ENCODE measurements at regions of chr4 and their contacts with region 1.

Region 1: DNA sequence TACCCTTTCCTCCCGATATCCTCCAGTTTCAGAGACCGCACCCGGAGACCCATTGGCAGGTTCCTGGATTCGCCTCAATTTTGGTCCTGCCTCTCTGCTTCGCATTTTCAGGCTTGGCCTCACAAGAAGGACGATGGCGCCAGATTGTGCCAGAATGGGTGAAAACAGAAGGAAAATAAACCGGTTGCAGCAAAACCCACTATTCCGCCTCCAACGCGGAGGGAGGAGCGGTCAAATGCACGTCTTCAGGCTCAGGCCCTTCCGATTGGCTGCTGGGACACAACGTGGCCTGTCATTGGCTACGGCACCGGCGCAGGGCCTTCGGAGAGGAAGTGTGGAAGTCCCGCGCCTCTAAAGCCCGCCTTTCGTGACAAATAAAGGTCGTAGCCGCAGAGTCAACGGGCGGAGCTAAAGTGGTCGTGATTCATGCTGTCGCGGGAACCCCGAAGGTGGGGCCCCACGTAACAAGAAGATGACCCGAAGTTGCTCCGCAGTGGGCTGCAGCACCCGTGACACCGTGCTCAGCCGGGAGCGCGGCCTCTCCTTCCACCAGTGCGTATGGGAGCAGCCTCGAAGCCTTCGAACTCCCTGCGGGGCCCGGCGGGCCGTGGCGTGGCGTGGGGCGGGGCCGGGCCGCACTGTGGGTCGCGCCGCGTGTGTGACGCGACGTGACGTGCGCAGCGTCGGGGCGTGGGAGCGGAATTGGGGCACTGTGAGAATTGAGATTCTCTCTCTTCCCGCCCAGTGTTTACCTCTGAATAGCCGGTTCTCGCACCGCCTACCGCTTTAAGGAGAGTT is at the start of gene THAP9:
- DNase-seq: peak; percentile 99
- H3K4me3 Mint-ChIP-seq: no peak within 1 kb of the TSS
- H3K27ac Mint-ChIP-seq: no peak within 1 kb of the TSS
- H3K4me1 Mint-ChIP-seq: peaks cover 38% of the 10 kb centered on the region
- H3K27me3 Mint-ChIP-seq: no peaks in the 10 kb centered on the region
- total RNA-seq, gene THAP9: 1.8 and 2.6 TPM in 2 replicates

Region 2: GRCh38 chr4:82346126-82346525 is 554.4 kb before region 1 on chr4:
- intact Hi-C with region 1: no loop called
- DNase-seq: no peak
- H3K4me3 Mint-ChIP-seq: no peak overlapping the region
- H3K27ac Mint-ChIP-seq: no peak overlapping the region
- H3K4me1 Mint-ChIP-seq: peaks cover 2% of the 10 kb centered on the region
- H3K27me3 Mint-ChIP-seq: no peaks in the 10 kb centered on the region

Region 3: GRCh38 chr4:82373816-82374625 is 526.5 kb before region 1 on chr4 and contains the start of gene HNRNPD:
- intact Hi-C with region 1: loop called (anchors 2 kb)
- DNase-seq: peak; percentile 94
- H3K4me3 Mint-ChIP-seq: peak within 1 kb of the TSS; percentile 95
- H3K27ac Mint-ChIP-seq: peak within 1 kb of the TSS; percentile 96
- H3K4me1 Mint-ChIP-seq: peaks cover 25% of the 10 kb centered on the region
- H3K27me3 Mint-ChIP-seq: no peaks in the 10 kb centered on the region
- total RNA-seq, gene HNRNPD: 461 and 489 TPM in 2 replicates

Region 4: DNA sequence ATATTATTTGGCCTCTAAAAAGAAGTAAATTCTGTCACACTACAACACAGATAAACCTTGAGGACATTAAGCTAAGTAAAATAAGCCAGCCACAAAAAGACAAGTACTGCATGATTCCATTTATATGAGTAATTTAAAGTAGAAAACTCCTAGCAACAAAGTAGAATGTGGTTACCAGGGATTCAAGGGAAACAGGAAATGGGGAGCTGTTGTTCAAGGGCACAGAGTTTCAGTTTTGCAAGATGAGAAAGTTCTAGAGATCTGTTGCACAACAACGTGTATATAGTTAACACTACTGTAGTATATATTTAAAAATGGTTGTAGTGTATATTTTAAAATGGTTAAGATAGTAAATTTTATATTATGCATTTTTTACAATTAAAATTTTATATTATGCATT is 34.9 kb before region 1 on chr4:
- intact Hi-C with region 1: loop called (anchors 2 kb)
- DNase-seq: peak; percentile 40
- H3K4me3 Mint-ChIP-seq: peak overlapping the region; percentile 11
- H3K27ac Mint-ChIP-seq: peak overlapping the region; percentile 43
- H3K4me1 Mint-ChIP-seq: peaks cover 34% of the 10 kb centered on the region
- H3K27me3 Mint-ChIP-seq: no peaks in the 10 kb centered on the region

Region 5: DNA sequence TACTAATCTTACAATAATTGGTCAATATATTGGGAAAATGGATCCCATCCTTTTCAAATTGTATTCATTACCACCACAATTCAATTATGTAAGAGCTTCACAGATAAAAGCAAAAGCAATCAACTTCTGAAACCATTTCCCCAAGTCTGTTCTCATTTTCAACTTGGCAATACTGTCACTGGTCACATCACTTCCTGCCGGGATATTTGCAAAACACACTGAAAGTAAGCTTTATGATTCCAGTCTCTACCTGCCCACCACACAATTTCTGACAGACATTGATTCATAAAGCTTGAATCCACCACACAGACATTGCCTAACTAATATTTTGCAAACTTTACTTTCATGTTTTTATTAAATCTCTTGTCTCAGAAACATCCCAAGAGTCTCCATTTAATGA is 56.5 kb after region 1 on chr4:
- intact Hi-C with region 1: no loop called
- DNase-seq: no peak
- H3K4me3 Mint-ChIP-seq: no peak overlapping the region
- H3K27ac Mint-ChIP-seq: peak overlapping the region; percentile 0
- H3K4me1 Mint-ChIP-seq: peaks cover 11% of the 10 kb centered on the region
- H3K27me3 Mint-ChIP-seq: no peaks in the 10 kb centered on the region

Region 6: GRCh38 chr4:83110223-83110945 is 209.9 kb after region 1 on chr4:
- intact Hi-C with region 1: loop called (anchors 2 kb)
- DNase-seq: peak; percentile 84
- H3K4me3 Mint-ChIP-seq: peak overlapping the region; percentile 84
- H3K27ac Mint-ChIP-seq: peak overlapping the region; percentile 91
- H3K4me1 Mint-ChIP-seq: peaks cover 48% of the 10 kb centered on the region
- H3K27me3 Mint-ChIP-seq: peaks cover 2% of the 10 kb centered on the region

Region 7: GRCh38 chr4:83267121-83267829 is 366.7 kb after region 1 on chr4:
- intact Hi-C with region 1: loop called (anchors 5 kb)
- DNase-seq: no peak
- H3K4me3 Mint-ChIP-seq: no peak overlapping the region
- H3K27ac Mint-ChIP-seq: no peak overlapping the region
- H3K4me1 Mint-ChIP-seq: peaks cover 29% of the 10 kb centered on the region
- H3K27me3 Mint-ChIP-seq: no peaks in the 10 kb centered on the region

Region 8: GRCh38 chr4:83455281-83456129 is 555.0 kb after region 1 on chr4 and contains the starts of genes HELQ and MRPS18C:
- intact Hi-C with region 1: loop called (anchors 2 kb)
- DNase-seq: peak; percentile 95
- H3K4me3 Mint-ChIP-seq: peak within 1 kb of the TSS; percentile 97
- H3K27ac Mint-ChIP-seq: peak within 1 kb of the TSS; percentile 98
- H3K4me1 Mint-ChIP-seq: peaks cover 34% of the 10 kb centered on the region
- H3K27me3 Mint-ChIP-seq: no peaks in the 10 kb centered on the region
- total RNA-seq, gene HELQ: 11.0 and 11.9 TPM in 2 replicates
- total RNA-seq, gene MRPS18C: 72.2 and 73.8 TPM in 2 replicates

Measured in activated T-helper 2 cell treated with anti-CD3 and anti-CD28 coated beads, Interferon-gamma antibody, Interleukin-2, Interleukin-4, amounts not matched to agents 10 μg/mL and 5 μg/mL and 100 μg/mL, durations not matched to agents 14 hours and 24 hours and 36 hours (primary cell).